ENCODE measurements at regions of chr2 and their contacts with region 1.

Region 1: DNA sequence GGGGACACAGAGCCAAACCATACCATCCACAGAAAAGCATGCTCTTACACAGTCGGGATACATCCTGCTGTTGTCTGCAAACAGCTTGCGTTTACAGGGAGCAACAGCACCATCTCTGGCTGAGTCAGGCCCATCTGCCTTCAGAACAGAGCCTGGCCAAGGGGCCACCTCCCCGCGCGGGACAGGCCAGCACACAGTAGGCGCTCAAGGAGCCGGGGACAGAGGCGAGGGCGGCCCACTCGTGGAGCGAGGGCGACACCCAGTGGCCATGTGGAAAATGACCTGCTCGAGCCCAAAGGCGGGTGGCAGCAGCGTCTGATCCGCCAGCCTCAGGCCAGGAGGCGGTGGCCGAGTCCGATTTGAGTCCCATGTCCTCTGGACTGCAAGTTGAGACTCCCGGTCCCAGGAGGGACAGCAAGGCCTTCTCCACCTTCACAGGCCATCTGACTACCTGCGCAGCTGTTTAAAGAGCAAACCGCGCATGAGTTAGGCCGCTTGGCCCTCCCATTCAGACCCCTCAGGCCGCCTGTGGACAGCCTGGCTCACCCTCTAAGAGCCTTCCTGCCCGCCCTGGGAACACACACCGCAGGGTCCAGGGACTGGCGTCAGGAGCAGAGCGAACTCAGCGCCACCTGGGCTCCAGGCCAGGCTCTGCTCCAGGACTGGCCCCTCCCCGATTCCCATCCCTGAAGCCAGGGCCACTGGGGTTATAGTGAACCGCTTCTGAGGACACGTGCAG is 38.3 kb downstream of the TTC32 start:
- DNase-seq: peak; percentile 44
- H3K4me3 ChIP-seq: no peak overlapping the region
- H3K27ac ChIP-seq: no peak overlapping the region
- H3K4me1 ChIP-seq: no peaks in the 10 kb centered on the region
- H3K27me3 ChIP-seq: no peaks in the 10 kb centered on the region
- CTCF ChIP-seq: peak; percentile 79 to 96 (median 92)
- POLR2A ChIP-seq: no peak

Region 2: DNA sequence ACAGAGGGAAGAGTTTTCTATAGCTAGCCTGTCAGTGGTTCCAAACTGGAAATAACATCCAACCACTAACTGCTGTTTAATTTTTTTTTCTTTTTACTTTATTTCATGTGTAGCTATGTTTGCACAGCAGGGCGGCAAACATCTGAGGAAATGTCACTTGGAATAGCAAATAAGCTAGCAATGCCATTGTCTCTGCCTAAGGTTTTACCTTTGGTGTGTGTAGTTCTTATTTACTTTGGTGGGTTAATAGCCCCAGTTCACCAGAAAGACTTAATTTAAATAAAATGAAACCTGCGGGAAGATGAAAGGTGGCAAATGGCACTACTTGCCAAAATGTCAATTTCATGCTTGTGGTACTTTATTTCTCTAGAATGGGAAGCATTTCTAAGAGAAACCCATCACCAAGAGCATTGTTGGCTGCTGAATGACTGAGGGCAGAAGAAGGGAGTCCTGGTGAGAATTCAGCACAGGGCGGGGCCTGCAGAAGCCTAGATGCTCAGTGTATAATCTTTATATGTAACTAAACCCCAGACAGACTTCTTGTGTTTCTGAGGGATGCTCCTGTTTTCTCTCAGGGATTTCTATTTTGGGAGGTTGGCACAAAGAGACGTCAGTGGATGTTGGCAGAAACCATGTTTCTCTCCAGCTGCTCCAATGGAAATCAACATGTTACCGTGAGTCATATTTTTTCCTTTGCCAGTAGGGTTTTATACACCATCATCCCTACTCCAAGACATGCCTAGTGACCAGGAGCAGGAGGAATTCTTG is 973.7 kb before region 1 on chr2:
- intact Hi-C with region 1: loop called (anchors 10 kb)
- DNase-seq: no peak
- H3K4me3 ChIP-seq: no peak overlapping the region
- H3K27ac ChIP-seq: no peak overlapping the region
- H3K4me1 ChIP-seq: no peaks in the 10 kb centered on the region
- H3K27me3 ChIP-seq: no peaks in the 10 kb centered on the region
- CTCF ChIP-seq: no peak
- POLR2A ChIP-seq: no peak

Region 3: GRCh38 chr2:18976168-18976961 is 887.1 kb before region 1 on chr2:
- intact Hi-C with region 1: loop called (anchors 10 kb)
- DNase-seq: no peak
- H3K4me3 ChIP-seq: peak overlapping the region in 1 of 2 donors; percentile 15
- H3K27ac ChIP-seq: peak overlapping the region; percentile 58 to 62
- H3K4me1 ChIP-seq: no peaks in the 10 kb centered on the region
- H3K27me3 ChIP-seq: no peaks in the 10 kb centered on the region
- CTCF ChIP-seq: no peak
- POLR2A ChIP-seq: no peak